ENCODE measurements at regions of chr10 and their contacts with region 1.

Region 1: DNA sequence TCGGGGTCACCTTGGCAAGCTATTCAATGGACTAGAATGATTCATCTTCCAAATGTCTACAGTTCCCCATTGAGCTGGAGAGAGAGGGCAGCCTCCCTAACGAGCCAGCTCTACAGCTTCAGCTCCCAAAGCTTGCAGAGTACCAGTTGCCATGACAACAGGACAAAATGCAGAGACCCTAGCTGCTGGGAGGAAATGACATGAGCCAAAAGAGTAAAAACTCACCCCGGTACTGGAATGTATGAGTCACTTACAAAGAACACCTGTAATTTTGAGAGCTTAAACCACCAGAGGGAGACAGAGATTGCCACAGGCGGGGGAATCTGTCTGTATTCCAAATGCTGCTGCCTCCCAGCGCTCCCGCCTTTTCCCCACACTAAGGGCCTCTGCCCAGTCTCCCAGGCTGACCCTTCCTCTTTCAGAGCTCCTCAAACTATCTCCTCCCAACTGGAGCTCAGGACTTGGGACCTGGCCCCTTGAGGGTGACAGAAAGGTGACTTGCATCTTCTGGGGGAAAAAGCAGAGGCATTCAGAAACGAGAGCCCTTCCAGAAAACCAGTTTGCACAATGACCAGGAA is 95.5 kb downstream of the CUL2 start:
- DNase-seq: peak; percentile 80
- H3K4me3 ChIP-seq: no peak overlapping the region
- H3K27ac ChIP-seq: peak overlapping the region; percentile 59
- H3K4me1 ChIP-seq: peaks cover 28% of the 10 kb centered on the region
- H3K27me3 ChIP-seq: no peaks in the 10 kb centered on the region
- CTCF ChIP-seq: peak; percentile 66 to 92

Region 2: DNA sequence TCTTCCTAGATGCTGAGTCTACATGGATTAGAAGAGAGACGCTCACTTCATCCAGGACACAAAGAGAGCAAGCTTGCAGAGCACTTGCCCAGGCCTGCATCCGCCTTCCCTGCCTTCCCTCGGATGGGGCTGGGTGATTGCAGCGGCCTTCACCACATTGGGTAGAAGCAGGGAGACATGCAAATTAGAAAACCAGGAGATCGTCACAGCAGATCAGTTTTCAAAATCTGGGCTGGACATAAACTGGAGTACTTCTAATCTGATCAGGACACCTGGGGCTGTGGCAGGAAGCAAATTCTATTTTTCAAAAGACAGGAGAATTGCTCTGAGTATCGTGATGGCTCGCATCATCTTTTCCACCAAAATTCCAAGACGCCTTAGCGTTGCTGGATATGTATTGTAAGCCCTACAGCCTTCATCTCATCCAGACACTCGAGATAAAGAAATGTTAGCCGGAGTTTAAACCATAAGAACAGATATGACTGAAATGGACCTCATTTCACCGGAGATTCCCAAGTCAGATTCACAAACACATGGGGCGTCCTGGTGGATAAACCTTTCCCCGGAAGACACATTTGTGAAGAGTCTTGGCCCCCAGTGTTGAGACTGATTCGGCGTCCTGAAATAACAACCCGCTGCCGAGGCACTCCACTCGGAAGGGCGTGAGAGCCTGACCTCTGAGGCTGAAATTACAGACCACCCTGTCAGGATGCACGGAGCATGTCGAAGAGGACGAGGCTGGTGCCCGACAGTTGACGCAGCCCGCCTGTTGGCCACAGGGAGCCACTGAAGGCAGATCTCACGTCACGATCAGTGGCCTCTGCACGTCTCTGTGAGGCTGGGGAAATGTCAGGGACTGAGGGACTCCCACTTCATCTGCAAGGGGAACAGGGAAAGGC is 88.3 kb before region 1 on chr10:
- CTCF ChIA-PET with region 1: no interaction called
- dilution Hi-C with region 1: loop called (anchors 5 kb)
- in situ Hi-C with region 1: no loop called
- intact Hi-C with region 1: no loop called
- DNase-seq: peak; percentile 93
- H3K4me3 ChIP-seq: no peak overlapping the region
- H3K27ac ChIP-seq: peak overlapping the region; percentile 21
- H3K4me1 ChIP-seq: peaks cover 23% of the 10 kb centered on the region
- H3K27me3 ChIP-seq: no peaks in the 10 kb centered on the region
- CTCF ChIP-seq: no peak

Region 3: DNA sequence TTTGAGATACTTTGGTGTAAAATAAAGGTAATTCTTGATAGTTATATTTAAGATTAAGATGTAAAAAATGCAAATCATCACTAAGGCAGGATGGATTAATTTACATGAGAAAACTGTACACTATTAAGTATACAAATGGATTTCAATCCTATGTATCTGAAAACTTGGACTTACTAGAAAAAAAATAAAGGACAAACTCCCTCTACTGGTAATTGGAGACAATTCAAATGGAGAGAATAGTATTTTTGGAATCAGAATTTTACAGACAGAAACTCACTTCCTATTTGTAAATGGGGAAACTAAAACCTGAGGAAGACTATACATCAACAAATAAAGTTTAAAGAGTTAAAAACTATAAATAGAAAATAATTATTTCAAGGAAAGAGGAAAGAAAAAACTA is 32.9 kb after region 1 on chr10:
- CTCF ChIA-PET with region 1: interaction called, 25 read pairs
- dilution Hi-C with region 1: no loop called
- in situ Hi-C with region 1: no loop called
- intact Hi-C with region 1: loop called (anchors 1 kb)
- DNase-seq: no peak
- H3K4me3 ChIP-seq: no peak overlapping the region
- H3K27ac ChIP-seq: no peak overlapping the region
- H3K4me1 ChIP-seq: peaks cover 10% of the 10 kb centered on the region
- H3K27me3 ChIP-seq: no peaks in the 10 kb centered on the region
- CTCF ChIP-seq: peak; percentile 32 to 41

Region 4: GRCh38 chr10:35195361-35196306 is 201.0 kb after region 1 on chr10:
- CTCF ChIA-PET with region 1: interaction called, 5 read pairs
- dilution Hi-C with region 1: no loop called
- in situ Hi-C with region 1: no loop called
- intact Hi-C with region 1: loop called (anchors 5 kb)
- DNase-seq: peak; percentile 90
- H3K4me3 ChIP-seq: peak overlapping the region; percentile 32 to 50 (median 43)
- H3K27ac ChIP-seq: peak overlapping the region; percentile 69
- H3K4me1 ChIP-seq: peaks cover 18% of the 10 kb centered on the region
- H3K27me3 ChIP-seq: no peaks in the 10 kb centered on the region
- CTCF ChIP-seq: peak; percentile 84 to 90

Region 5: DNA sequence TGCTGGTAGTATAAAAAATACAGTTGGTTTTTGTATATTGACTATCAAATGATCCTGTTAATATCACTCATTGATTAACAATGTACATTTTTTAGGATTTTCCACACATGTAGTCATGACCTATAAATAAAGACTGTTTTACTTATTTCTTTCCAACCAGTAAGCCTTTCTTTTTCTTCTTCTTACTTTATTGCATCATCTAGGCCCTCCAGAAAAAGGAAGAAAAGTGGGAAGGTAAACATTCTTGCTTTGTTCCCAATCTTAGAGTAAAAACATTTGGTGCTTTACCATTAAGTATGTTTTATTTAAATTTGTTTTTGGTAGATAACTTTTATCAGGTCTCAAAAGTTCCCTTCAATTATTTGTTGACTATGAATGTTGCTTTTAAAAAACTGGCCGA is 294.5 kb after region 1 on chr10:
- CTCF ChIA-PET with region 1: no interaction called
- dilution Hi-C with region 1: no loop called
- in situ Hi-C with region 1: no loop called
- intact Hi-C with region 1: no loop called
- DNase-seq: no peak
- H3K4me3 ChIP-seq: no peak overlapping the region
- H3K27ac ChIP-seq: no peak overlapping the region
- H3K4me1 ChIP-seq: no peaks in the 10 kb centered on the region
- H3K27me3 ChIP-seq: no peaks in the 10 kb centered on the region
- CTCF ChIP-seq: no peak

Region 6: GRCh38 chr10:35554461-35555056 is 559.9 kb after region 1 on chr10:
- CTCF ChIA-PET with region 1: no interaction called
- dilution Hi-C with region 1: no loop called
- in situ Hi-C with region 1: no loop called
- intact Hi-C with region 1: no loop called
- DNase-seq: no peak
- H3K4me3 ChIP-seq: no peak overlapping the region
- H3K27ac ChIP-seq: no peak overlapping the region
- H3K4me1 ChIP-seq: peaks cover 13% of the 10 kb centered on the region
- H3K27me3 ChIP-seq: no peaks in the 10 kb centered on the region
- CTCF ChIP-seq: no peak